ENCODE measurements at regions of chr9 and their contacts with region 1.

Region 1: GRCh38 chr9:36102742-36103495 is 33.6 kb upstream of the GLIPR2 start:
- DNase-seq: peak; percentile 80
- CTCF ChIP-seq: peak; percentile 87

Region 2: GRCh38 chr9:35774907-35775635 is 327.8 kb before region 1 on chr9:
- CTCF ChIA-PET with region 1: no interaction called
- POLR2A ChIA-PET with region 1: no interaction called
- DNase-seq: no peak
- CTCF ChIP-seq: no peak

Region 3: DNA sequence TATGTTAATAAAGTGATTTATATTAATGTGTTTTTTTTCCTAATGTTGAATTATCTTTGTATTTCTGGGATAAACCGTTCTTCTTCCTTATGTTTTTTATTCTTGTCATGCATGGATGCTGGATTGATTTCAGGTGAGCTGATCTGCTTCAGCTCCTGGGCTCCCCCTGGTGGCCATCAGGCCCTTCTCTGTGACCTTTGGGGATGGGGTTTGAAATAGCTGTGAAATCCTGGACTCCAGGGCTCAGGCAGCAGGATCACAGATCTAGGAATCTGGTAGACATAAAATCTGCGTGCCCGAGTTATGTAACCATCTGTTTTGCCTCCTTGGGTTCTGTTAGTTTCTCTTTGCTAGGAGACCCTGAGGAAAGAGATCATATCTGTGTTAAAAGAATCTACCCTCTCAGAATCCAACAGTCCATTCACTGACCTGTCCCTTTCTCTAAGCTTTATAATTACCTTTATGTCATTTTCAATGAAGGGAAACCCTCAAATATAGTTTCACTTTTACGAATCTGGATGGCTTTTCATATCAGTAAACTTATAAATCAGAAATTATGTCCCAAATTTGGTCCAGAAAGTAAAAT is 220.6 kb before region 1 on chr9:
- CTCF ChIA-PET with region 1: no interaction called
- POLR2A ChIA-PET with region 1: no interaction called
- DNase-seq: peak; percentile 78
- CTCF ChIP-seq: peak; percentile 97

Region 4: DNA sequence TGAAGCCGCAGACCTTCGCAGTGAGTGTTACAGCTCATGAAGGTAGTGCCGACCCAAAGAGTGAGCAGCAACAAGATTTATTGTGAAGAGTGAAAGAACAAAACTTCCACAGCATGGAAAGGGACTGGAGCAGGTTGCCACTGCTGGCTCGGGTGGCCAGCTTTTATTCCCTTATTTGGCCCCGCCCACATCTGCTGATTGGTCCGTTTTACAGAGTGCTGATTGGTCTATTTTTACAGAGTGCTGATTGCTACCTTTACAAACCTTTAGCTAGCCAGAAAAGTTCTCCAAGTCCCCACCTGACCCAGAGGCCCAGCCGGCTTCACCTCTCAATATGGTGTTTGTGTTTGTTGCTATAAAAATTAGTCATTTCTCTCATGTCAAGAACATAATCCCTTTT is 16.5 kb before region 1 on chr9:
- CTCF ChIA-PET with region 1: interaction called, 27 read pairs
- POLR2A ChIA-PET with region 1: no interaction called
- DNase-seq: no peak
- CTCF ChIP-seq: no peak

Region 5: DNA sequence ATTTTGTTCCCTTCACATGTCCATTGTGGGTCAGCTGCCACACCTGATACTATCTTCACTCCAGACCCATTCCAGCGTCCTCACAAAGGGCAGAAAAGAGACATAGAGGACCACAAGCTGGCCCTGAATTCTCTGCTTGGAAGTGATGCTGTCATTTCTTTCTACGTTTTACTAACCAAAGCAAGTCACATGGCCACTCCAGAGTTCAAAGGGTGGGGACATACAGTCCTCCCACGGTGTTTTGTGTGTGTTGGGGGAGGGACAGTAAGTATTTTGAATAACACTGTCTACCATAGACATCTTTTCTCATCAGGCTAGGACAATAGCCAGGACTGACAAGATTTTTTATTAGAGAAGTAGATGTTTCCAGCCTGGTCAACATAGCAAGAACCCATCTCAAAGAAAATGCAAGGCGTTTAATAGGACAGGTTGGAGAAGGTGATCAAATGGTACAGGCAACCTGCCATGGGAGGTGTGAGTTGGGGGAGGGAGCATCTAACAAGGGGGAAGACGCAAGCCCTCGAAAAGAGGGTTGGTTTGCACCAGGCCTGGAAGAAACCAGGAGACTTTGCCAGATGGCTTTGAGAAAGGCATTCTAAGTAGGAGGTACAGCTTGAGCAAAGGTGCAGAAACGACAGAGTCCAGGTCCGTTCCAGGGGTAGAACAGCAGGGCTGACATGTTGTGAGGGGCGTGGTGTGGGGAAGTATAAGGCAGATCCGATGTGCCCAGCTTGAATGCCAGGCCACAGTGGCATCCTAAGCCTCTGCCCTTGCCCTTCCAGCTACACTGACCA is 22.3 kb after region 1 on chr9:
- CTCF ChIA-PET with region 1: interaction called, 12 read pairs
- POLR2A ChIA-PET with region 1: no interaction called
- DNase-seq: no peak
- CTCF ChIP-seq: no peak

Region 6: GRCh38 chr9:36148311-36149051 is 45.6 kb after region 1 on chr9:
- CTCF ChIA-PET with region 1: interaction called, 39 read pairs
- POLR2A ChIA-PET with region 1: no interaction called
- DNase-seq: peak; percentile 58
- CTCF ChIP-seq: no peak

Region 7: DNA sequence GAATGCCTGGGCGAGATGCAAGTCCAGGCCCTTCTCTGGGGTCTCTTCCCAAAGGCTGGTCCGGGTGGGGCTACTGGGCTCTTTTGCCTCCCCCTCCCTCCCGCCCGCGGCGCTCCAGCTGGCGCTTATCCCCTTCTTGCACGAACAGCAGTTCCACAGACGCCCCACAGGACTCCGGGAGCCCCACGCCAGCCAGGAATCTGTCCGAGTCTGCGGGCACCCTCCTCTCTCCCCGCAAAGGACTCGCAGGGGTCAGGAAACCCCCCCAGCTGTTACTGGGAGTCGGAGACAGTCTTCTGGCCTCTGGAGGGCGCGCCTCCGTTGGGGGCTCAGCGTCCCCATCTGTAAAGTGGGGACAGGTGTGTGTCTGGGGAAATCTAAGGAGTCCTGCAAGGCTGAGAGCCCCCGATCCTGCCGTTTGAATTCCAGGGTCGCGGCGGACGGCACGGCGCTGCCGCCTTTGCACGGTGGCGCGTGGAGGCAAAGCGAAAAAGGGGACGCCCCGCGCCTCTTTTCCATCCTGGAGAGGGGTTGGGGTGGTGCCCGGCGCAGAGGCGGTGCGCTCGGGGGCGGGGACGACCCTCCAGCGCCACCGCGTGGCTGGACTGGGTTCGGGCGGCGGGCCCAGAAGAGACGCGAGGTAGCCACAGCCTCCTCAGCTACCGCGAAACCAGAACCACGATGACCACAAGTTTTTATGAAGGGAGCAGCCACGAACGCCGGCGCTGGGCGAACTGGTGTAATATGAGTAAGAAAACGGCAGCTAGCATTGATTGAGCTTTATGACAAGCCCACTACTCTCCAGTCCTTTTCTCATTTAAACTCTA is 63.4 kb after region 1 on chr9:
- CTCF ChIA-PET with region 1: interaction called, 262 read pairs
- POLR2A ChIA-PET with region 1: no interaction called
- DNase-seq: peak; percentile 93
- CTCF ChIP-seq: peak; percentile 91

Region 8: GRCh38 chr9:36190388-36191287 is 87.7 kb after region 1 on chr9 and contains the start of gene CLTA:
- CTCF ChIA-PET with region 1: interaction called, 44 read pairs
- POLR2A ChIA-PET with region 1: interaction called, 3 read pairs
- DNase-seq: peak; percentile 99
- CTCF ChIP-seq: peak; percentile 39

Measured in GM10248 (cell line).